Activated naive CD8-positive, alpha-beta T cell treated with anti-CD3 and anti-CD28 coated beads, Interleukin-2, amount 10 ng/mL, durations not matched to agents 7 days and 5 days (primary cell): ENCODE measurements at regions of chr11 and their contacts with region 1.

Region 1: DNA sequence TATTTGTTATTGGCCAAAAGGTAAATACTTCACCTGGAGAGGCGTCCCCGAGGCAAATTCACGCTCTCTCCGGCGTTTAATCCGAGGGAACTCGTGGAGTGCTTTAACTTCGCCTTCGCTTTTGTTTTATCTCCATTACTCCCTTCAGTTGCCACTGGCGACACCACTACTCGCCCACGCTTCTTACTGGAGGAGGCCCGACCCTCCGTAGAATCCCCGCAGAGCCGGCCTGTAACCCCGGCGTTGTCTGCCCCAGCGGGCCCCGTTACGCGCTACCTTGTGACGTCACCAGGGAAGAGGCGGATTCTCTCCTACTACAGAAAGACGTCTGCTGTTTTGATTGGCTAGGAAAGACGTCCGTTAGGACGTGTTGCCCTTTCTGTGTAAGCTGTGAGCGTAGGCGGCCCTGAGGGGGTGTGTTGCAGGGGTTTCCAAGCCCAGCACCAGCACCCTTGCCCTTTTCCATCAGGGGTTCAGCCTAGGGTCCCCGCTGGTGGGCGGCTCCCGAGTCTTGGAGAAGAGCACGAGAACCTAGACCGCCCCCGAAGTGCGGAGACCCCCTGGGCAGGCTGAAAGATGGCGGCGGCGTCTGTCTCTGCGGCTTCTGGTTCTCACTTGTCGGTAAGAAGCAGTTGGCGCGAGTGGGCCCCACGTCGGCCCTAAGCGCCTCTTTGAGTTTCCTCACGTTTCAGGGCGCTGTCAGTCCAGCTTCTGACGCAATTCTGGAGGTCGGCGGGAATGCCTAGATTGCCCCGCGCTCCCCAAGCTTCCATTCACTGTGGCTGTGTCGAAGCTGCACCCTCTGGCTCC is at the start of gene CEP57:
- DNase-seq: peak; percentile 89
- ATAC-seq: peak; percentile 64
- H3K4me3 Mint-ChIP-seq: peak within 1 kb of the TSS; percentile 95
- H3K27ac Mint-ChIP-seq: peak within 1 kb of the TSS; percentile 100
- H3K4me1 Mint-ChIP-seq: peaks cover 44% of the 10 kb centered on the region
- H3K27me3 Mint-ChIP-seq: no peaks in the 10 kb centered on the region
- total RNA-seq, gene CEP57: 101 to 106 TPM

Region 2: DNA sequence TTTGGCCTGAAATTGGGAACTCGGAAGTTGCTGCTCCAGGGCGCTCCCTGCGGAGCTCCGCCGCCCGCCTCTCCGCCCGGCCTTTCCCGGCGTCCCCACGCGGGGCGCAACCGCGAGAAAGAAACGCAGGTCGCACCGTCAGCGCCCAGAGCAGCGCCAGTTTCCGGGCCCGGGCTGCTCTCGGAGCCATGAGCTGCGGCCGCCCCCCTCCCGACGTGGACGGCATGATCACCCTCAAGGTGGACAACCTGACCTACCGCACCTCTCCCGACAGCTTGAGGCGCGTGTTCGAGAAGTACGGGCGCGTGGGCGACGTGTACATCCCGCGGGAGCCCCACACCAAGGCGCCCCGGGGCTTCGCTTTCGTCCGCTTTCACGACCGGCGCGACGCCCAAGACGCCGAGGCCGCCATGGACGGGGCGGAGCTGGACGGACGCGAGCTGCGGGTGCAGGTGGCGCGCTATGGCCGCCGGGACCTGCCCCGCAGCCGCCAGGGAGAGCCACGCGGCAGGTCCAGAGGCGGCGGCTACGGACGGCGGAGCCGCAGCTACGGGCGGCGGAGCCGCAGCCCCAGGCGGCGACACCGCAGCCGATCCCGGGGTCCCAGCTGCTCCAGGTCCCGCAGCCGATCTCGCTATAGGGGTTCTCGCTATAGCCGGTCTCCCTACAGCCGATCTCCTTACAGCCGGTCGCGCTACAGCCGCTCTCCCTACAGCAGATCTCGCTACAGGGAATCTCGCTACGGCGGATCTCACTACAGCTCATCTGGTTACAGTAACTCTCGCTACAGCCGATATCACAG is 723.1 kb before region 1 on chr11:
- POLR2A ChIA-PET with region 1: interaction called, 40 read pairs
- DNase-seq: peak; percentile 82
- ATAC-seq: peak; percentile 71
- H3K4me3 Mint-ChIP-seq: peak overlapping the region; percentile 88
- H3K27ac Mint-ChIP-seq: peak overlapping the region; percentile 92
- H3K4me1 Mint-ChIP-seq: peaks cover 15% of the 10 kb centered on the region
- H3K27me3 Mint-ChIP-seq: peaks cover 7% of the 10 kb centered on the region

Region 3: DNA sequence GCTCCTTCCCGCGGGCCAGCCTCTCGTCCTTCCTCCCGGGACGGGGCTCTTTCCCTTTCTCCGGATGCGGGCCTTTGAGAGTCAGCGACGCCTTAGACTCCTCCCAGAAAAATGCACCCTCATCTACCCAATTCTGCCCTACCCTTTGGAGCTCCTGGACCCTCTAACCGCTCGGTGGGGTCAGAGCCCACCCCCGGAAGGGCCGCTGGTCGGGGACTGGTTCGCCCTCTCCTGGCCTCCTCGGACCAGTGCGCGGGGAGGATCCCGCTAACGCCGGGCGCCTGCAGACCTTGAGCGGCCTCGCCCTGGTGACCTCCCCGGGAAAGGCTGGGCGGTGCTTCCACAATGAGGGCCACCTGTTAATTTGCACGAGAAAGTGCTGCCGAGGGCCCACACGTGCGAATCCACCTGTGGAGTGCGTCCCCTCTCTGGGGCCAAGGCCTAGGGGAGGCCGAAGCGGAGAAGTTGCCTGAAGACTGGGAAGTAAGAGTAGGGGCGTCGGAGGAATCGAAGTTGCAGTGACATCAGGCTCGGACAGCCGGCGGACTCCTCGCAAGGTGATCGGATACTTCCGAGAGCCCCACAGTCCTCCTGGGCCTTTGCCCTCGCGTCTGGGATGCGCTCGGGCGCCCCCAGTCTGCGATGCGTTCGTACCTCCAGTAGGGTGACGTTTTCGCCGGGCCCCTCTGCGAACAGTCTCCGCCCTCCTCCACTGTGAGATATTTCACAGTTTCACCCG is 639.2 kb before region 1 on chr11:
- POLR2A ChIA-PET with region 1: interaction called, 51 read pairs
- DNase-seq: peak; percentile 88
- ATAC-seq: peak; percentile 93
- H3K4me3 Mint-ChIP-seq: peak overlapping the region; percentile 89
- H3K27ac Mint-ChIP-seq: peak overlapping the region; percentile 89
- H3K4me1 Mint-ChIP-seq: peaks cover 34% of the 10 kb centered on the region
- H3K27me3 Mint-ChIP-seq: peaks cover 6% of the 10 kb centered on the region

Region 4: DNA sequence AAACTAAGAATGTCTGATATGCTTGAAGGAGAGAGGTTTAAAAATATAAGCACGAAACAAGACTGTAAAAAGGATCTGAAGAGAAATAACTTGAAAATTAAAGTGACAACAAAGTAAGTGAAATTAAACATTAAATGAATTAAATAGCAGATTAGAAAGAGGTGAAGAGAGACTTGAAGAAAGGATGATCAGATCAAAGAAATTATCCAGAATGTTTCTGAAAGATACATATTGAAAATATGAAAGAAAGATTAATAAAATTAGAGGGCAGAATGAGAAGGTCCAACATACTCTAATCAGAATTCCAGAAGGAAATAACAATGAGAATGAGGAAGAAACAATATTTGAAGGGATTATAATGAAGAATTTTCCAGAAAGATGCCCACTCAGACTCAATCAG is 151.8 kb before region 1 on chr11:
- POLR2A ChIA-PET with region 1: no interaction called
- DNase-seq: no peak
- ATAC-seq: no peak
- H3K4me3 Mint-ChIP-seq: no peak overlapping the region
- H3K27ac Mint-ChIP-seq: no peak overlapping the region
- H3K4me1 Mint-ChIP-seq: peaks cover 17% of the 10 kb centered on the region
- H3K27me3 Mint-ChIP-seq: no peaks in the 10 kb centered on the region

Region 5: DNA sequence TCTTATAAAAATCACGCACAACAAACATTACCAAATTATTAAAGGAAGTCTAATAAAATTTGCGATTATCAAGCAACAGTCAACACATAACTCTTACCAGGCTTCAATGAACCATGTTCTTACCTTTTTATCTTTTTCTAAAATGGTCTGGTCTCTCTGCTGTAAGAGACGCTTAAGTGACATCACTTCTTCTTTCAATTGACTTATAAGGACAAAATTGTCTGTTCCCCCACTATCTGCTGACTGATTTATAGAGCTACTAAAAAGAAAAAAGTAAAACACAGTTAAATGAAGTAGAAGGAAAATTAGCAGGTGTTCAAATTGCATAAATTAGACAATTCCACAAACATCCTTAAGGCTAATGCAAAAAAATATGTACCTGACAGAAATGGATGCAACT is 11.6 kb before region 1 on chr11:
- POLR2A ChIA-PET with region 1: interaction called, 13 read pairs
- DNase-seq: no peak
- ATAC-seq: no peak
- H3K4me3 Mint-ChIP-seq: no peak overlapping the region
- H3K27ac Mint-ChIP-seq: no peak overlapping the region
- H3K4me1 Mint-ChIP-seq: peaks cover 27% of the 10 kb centered on the region
- H3K27me3 Mint-ChIP-seq: no peaks in the 10 kb centered on the region

Region 6: DNA sequence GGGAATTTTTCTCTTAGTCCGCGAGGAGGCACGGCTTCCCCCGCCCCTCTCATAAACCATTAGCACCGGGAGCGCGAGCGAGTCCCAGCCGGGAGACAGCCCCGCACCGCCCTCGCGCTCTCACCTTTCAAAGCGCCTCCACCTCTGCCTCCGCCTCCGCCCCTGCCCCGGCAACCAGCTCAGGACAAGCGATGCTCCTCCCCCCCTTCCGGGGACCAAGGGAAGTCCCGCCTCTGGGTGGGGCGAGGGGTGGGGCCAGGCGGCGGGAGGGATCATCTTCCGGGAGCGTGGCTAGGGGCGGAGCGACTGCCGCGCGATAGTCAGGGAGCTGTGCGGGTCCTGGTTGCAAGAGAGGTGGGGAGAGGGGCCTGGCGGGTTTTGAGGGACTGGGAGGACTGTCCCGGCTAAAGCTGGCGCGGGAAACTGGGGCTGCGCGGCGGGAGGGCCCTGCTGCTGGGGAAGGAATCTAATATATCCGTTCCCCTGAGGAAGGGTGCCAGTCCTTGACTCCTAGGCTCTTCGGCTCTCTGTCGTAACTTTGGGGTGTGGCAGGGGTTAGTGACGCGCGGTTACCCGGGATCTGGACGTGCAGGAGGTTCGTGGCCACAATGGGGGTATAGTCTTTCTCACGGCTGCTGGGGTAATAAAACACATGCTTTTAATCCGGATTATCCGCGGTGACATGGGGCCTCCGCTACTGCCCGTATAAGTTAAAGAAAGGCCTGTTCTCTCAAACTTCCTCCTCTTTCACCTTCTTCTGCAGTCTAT is 599.6 kb after region 1 on chr11 and contains the starts of genes CCDC82 and JRKL:
- POLR2A ChIA-PET with region 1: interaction called, 55 read pairs
- DNase-seq: peak; percentile 98
- ATAC-seq: peak; percentile 91
- H3K4me3 Mint-ChIP-seq: peak within 1 kb of the TSS; percentile 88
- H3K27ac Mint-ChIP-seq: peak within 1 kb of the TSS; percentile 88
- H3K4me1 Mint-ChIP-seq: peaks cover 30% of the 10 kb centered on the region
- H3K27me3 Mint-ChIP-seq: no peaks in the 10 kb centered on the region
- total RNA-seq, gene CCDC82: 34.6 to 40.3 TPM
- total RNA-seq, gene JRKL: 12.7 to 14.1 TPM